ENCODE measurements at regions of chr19 and their contacts with region 1.

Region 1: DNA sequence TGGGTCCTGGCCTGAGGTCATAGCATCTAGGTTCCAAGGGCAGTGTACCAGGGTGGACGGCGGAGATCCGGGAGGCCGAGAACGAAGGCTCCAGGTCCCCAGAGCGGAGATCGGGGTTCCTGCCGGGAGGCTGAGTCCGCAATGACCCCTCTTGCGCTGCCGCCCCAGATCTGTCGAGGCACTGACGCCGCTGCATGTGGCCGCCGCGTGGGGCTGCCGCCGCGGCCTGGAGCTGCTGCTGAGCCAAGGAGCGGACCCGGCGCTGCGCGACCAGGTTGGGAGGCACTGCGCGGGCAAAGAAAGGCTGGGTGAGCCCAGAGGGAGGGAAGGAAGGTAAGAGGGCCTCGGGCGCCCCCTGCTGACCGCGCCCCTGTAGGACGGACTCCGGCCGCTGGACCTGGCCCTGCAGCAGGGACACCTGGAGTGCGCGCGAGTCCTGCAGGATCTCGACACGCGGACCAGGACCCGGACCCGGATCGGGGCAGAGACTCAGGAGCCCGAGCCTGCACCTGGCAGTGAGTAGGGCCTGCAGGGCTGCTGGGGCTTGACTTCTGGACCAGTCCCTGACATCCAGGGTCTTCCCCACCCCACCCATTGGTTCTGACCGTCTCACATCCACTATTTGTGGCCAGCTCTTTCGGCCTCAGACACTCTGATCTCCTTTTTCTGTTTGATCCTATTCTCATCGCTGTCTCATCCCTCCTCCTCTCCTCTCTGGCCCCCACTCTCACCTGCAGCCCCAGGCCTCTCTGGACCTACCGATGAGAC is 971 bp downstream of the ANKLE1 start:
- DNase-seq: peak; percentile 66 to 87 (median 76)
- H3K4me3 ChIP-seq: no peak overlapping the region
- H3K27ac ChIP-seq: peak overlapping the region in 1 of 2 donors; percentile 19
- H3K4me1 ChIP-seq: peaks cover 6% of the 10 kb centered on the region
- H3K27me3 ChIP-seq: no peaks in the 10 kb centered on the region
- CTCF ChIP-seq: peak; percentile 56 to 86 (median 75)
- EP300 ChIP-seq: no peak
- POLR2A ChIP-seq: no peak

Region 2: DNA sequence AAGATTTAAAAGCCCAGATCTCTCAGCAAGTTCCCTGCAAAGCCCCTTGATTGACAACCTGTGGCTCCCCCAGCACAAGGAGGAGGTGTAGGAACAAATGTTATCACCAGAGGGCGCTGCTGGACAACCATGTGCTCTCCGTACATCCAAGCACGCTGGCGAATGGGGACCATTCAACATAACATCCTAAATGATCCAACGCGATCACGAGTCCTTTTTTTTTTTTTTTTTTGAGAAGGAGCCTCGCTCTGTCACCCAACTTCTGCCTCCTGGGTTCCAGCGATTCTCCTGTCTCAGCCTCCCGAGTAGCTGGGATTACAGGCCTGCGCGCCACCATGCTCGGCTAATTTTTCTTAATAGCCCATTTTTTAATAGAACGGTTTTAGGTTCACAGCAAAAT is 511.1 kb before region 1 on chr19:
- intact Hi-C with region 1: loop called in 1 of 4 experiments (anchors 10 kb)
- DNase-seq: peak; percentile 72 to 85 (median 76)
- H3K4me3 ChIP-seq: no peak overlapping the region
- H3K27ac ChIP-seq: no peak overlapping the region
- H3K4me1 ChIP-seq: no peaks in the 10 kb centered on the region
- H3K27me3 ChIP-seq: no peaks in the 10 kb centered on the region
- CTCF ChIP-seq: peak; percentile 53 to 82 (median 70)
- EP300 ChIP-seq: no peak
- POLR2A ChIP-seq: no peak

Region 3: DNA sequence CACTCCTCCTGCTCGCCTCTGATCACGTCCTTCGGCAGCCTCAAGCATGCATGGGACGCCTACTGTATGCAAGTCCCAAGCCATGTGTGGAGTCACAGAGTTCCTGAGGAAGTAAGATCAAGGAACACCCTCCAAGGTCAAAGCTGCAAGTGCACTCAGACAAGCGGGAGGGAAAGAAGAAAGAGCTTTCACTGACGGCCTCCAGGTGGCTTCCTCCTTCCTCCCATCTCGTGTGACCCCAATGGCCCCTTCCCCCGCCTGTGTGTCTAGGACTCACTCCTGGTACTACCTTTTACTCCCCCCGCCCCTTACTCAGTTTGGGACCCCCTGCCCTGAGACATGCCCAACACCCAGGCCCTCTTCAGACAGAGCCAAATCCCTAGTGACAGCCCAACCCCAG is 213.5 kb before region 1 on chr19:
- intact Hi-C with region 1: loop called (anchors 2 to 10 kb)
- DNase-seq: no peak
- H3K4me3 ChIP-seq: no peak overlapping the region
- H3K27ac ChIP-seq: no peak overlapping the region
- H3K4me1 ChIP-seq: peaks cover 3% of the 10 kb centered on the region
- H3K27me3 ChIP-seq: no peaks in the 10 kb centered on the region
- CTCF ChIP-seq: no peak
- EP300 ChIP-seq: no peak
- POLR2A ChIP-seq: no peak

Region 4: GRCh38 chr19:17075035-17075863 is 207.4 kb before region 1 on chr19 and contains the starts of genes HAUS8 and MYO9B:
- intact Hi-C with region 1: loop called in 2 of 4 experiments (anchors 10 kb)
- DNase-seq: peak; percentile 99 to 100 (median 99)
- H3K4me3 ChIP-seq: peak within 1 kb of the TSS; percentile 57
- H3K27ac ChIP-seq: peak within 1 kb of the TSS in 1 of 2 donors; percentile 19
- H3K4me1 ChIP-seq: peaks cover 9% of the 10 kb centered on the region
- H3K27me3 ChIP-seq: no peaks in the 10 kb centered on the region
- CTCF ChIP-seq: no peak
- EP300 ChIP-seq: no peak
- POLR2A ChIP-seq: peak; percentile 12
- total RNA-seq, gene HAUS8: 4.3 to 7.0 (median 5.5) TPM
- total RNA-seq, gene MYO9B: 17.9 to 56.3 (median 38.4) TPM

Region 5: GRCh38 chr19:17205237-17206140 is 77.2 kb before region 1 on chr19:
- intact Hi-C with region 1: loop called (anchors 5 to 10 kb)
- DNase-seq: peak; percentile 39 to 79 (median 64)
- H3K4me3 ChIP-seq: no peak overlapping the region
- H3K27ac ChIP-seq: no peak overlapping the region
- H3K4me1 ChIP-seq: no peaks in the 10 kb centered on the region
- H3K27me3 ChIP-seq: no peaks in the 10 kb centered on the region
- CTCF ChIP-seq: peak; percentile 18 to 60 (median 52)
- EP300 ChIP-seq: no peak
- POLR2A ChIP-seq: no peak

Region 6: GRCh38 chr19:17245244-17245984 is 37.3 kb before region 1 on chr19 and contains the start of gene NR2F6:
- intact Hi-C with region 1: no loop called
- DNase-seq: peak; percentile 46 to 72 (median 59)
- H3K4me3 ChIP-seq: peak within 1 kb of the TSS; percentile 87
- H3K27ac ChIP-seq: peak within 1 kb of the TSS; percentile 44 to 66
- H3K4me1 ChIP-seq: peaks cover 4% of the 10 kb centered on the region
- H3K27me3 ChIP-seq: no peaks in the 10 kb centered on the region
- CTCF ChIP-seq: no peak
- EP300 ChIP-seq: no peak
- POLR2A ChIP-seq: no peak
- total RNA-seq, gene NR2F6: 21.5 to 46.4 (median 28.4) TPM